ENCODE measurements at regions of chr14 and their contacts with region 1.

Region 1: GRCh38 chr14:77862154-77862786 is 62.4 kb downstream of the ADCK1 start:
- DNase-seq: peak; percentile 23 to 52
- ATAC-seq: peak; percentile 45 to 64
- H3K4me3 ChIP-seq: no peak overlapping the region
- H3K27ac ChIP-seq: no peak overlapping the region
- H3K4me1 ChIP-seq: no peaks in the 10 kb centered on the region
- H3K27me3 ChIP-seq: no peaks in the 10 kb centered on the region
- CTCF ChIP-seq: peak; percentile 74 to 95 (median 85)
- POLR2A ChIP-seq: no peak

Region 2: DNA sequence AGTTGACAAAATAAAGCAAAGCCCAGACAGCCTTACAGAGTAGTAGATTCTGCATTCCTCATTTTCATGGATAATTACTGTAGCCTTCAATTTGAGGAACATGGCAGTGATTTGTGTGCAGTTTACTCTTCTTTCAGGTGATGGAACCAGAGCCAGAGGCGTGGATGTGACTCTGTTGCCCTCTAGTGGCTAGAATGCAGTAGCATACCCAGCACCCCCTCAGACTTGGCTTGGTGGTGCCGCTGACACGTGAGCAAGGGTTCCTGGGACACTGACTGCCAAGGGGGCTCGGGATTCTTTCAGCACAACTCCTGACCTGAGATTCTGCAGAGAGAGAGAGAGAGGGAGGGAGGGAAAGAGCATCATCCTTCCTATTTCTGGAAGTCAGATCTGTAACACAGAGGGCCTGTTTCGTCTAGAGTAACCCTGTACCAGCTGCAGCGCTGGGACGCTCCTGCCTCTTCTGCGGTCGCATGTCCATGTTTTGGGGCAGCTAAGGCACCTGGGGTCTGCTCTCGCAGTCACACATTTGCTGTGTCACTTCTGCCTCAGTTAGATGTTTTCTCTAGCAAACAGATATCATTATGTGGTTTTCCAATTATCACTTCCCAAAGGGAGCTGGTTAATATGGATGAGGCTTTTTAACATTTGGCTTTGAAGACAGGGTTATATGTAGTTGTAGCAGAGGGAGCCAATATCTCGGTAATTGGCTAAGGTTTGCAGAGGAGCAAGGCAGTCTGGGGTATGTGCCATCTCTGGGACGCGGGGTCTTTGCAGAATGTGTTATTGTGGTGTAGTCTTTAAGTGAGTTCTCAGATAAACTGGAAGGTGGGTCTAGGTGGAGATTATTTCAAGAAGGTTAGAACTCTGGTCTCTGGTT is 736.0 kb after region 1 on chr14:
- in situ Hi-C with region 1: loop called in 1 of 4 experiments (anchors 25 kb)
- intact Hi-C with region 1: no loop called
- DNase-seq: peak; percentile 7 to 28
- ATAC-seq: peak; percentile 73 to 79
- H3K4me3 ChIP-seq: no peak overlapping the region
- H3K27ac ChIP-seq: no peak overlapping the region
- H3K4me1 ChIP-seq: no peaks in the 10 kb centered on the region
- H3K27me3 ChIP-seq: no peaks in the 10 kb centered on the region
- CTCF ChIP-seq: peak; percentile 72 to 88 (median 79)
- POLR2A ChIP-seq: no peak

Region 3: GRCh38 chr14:78697341-78697740 is 835.1 kb after region 1 on chr14:
- in situ Hi-C with region 1: no loop called
- intact Hi-C with region 1: loop called (anchors 10 kb)
- DNase-seq: no peak
- ATAC-seq: no peak
- H3K4me3 ChIP-seq: no peak overlapping the region
- H3K27ac ChIP-seq: no peak overlapping the region
- H3K4me1 ChIP-seq: no peaks in the 10 kb centered on the region
- H3K27me3 ChIP-seq: no peaks in the 10 kb centered on the region
- CTCF ChIP-seq: peak in 4 of 5 experiments; percentile 13 to 40 (median 26)
- POLR2A ChIP-seq: no peak

Region 4: GRCh38 chr14:78836777-78837176 is 974.5 kb after region 1 on chr14:
- in situ Hi-C with region 1: no loop called
- intact Hi-C with region 1: loop called (anchors 10 kb)
- DNase-seq: peak in 1 of 2 donors; percentile 11
- ATAC-seq: peak in 1 of 2 donors; percentile 55
- H3K4me3 ChIP-seq: no peak overlapping the region
- H3K27ac ChIP-seq: no peak overlapping the region
- H3K4me1 ChIP-seq: no peaks in the 10 kb centered on the region
- H3K27me3 ChIP-seq: no peaks in the 10 kb centered on the region
- CTCF ChIP-seq: peak in 2 of 5 experiments; percentile 4 to 40
- POLR2A ChIP-seq: no peak

Measured in gastrocnemius medialis (tissue), 4 donors.